HCT116 (cell line): ENCODE measurements at regions of chr13 and their contacts with region 1.

Region 1: DNA sequence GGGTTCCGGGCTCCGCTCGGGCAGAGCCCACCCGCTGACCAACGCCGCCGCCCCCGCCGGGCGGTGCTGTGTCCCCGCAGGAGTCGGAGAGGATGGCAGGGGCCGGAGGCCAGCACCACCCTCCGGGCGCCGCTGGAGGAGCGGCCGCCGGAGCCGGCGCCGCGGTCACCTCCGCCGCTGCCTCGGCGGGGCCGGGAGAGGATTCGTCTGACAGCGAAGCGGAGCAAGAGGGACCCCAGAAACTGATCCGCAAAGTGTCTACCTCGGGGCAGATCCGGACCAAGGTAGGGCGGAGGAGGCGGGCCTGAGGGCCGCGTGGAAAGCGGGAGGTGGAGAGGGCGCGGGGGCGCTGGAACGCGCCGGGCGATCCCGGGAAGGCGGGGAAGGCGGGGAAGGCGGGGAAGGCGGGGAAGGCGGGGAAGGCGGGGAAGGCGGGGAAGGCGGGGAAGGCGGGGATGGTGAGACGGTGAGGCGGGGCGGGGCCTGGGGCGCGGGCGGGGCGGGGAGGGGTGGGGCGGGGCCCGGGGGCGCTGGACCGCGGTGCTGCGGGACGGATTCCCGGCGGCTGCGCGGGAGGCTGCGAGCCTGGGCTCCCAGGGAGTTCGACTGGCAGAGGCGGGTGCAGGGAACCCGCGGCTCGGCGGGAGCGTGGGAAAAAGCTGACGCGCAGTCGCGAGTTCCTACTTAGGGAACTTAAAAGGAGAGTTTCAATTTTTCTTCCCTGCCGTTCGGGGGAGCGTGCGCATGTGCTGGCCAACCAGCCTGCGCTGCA is 420 bp downstream of the DGKH start:
- DNase-seq: peak; percentile 33
- ATAC-seq: peak; percentile 76
- H3K4me3 ChIP-seq: peak overlapping the region; percentile 69 to 83
- H3K27ac ChIP-seq: peak overlapping the region; percentile 85
- H3K4me1 ChIP-seq: peaks cover 10 to 17% of the 10 kb centered on the region in 2 experiments
- H3K27me3 ChIP-seq: no peaks in the 10 kb centered on the region
- CTCF ChIP-seq: 0 out of 6 replicates have a peak, but pooled peaks of 1 of the 3 experiments have one; percentile 7
- POLR2A ChIP-seq: peak; percentile 64
- RAD21 ChIP-seq: no peak

Region 2: DNA sequence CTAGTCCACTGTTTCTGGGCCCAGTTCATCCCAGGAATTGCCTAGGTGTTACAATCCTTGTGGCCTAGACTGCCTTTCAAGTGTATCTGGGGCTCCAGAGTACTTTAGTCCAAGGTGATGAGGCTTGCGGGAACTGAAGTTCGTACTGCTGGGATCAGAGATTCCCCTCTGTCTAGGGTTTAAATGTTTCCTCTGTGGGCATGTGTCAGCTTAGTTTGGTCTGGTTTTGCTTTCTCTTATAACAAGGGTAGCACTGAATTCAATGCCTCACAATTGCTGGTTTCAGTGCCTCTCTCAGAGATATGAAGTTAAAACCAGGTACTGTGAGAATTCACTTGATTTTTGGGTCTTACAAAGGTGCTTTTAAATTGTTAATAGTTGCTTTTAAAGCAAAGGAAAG is 560.7 kb before region 1 on chr13:
- CTCF ChIA-PET with region 1: no interaction called
- POLR2A ChIA-PET with region 1: no interaction called
- RAD21 ChIA-PET with region 1: no interaction called
- intact Hi-C with region 1: no loop called
- DNase-seq: no peak
- ATAC-seq: no peak
- H3K4me3 ChIP-seq: no peak overlapping the region
- H3K27ac ChIP-seq: no peak overlapping the region
- H3K4me1 ChIP-seq: no peaks in the 10 kb centered on the region
- H3K27me3 ChIP-seq: no peaks in the 10 kb centered on the region
- CTCF ChIP-seq: no peak
- POLR2A ChIP-seq: no peak
- RAD21 ChIP-seq: no peak

Region 3: GRCh38 chr13:41895478-41895877 is 153.4 kb before region 1 on chr13:
- CTCF ChIA-PET with region 1: no interaction called
- POLR2A ChIA-PET with region 1: no interaction called
- RAD21 ChIA-PET with region 1: no interaction called
- intact Hi-C with region 1: no loop called
- DNase-seq: no peak
- ATAC-seq: no peak
- H3K4me3 ChIP-seq: no peak overlapping the region
- H3K27ac ChIP-seq: no peak overlapping the region
- H3K4me1 ChIP-seq: no peaks in the 10 kb centered on the region
- H3K27me3 ChIP-seq: no peaks in the 10 kb centered on the region
- CTCF ChIP-seq: no peak
- POLR2A ChIP-seq: no peak
- RAD21 ChIP-seq: no peak

Region 4: DNA sequence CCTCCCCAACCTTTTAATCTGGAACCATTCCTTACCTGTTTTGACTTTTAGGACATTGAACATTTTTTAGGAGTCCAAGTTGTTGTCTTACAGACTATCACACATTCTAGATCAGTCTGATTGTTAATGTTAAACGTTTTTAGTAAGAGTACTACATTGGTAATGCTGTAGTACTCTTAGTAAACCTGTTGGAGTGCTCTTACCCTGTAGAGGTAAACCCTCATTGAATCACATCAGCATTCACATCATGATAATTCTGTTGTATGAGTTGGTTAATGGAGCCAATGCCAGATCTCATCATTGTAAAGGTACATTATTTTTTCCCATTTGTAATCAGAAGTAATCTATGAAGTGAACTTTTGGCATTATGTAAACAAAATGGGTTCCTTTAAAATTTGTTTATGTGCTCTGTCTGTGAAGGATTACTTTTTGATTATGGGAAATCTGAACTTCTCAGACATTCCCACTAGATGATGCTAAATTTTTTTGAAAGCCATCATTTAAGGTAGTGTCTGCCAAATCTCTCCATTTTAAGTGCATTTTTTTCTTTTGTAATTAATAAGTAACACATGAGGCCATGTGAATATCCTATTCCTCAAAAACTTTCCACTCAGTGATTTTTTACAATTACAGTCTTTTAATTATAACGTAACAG is 143.1 kb before region 1 on chr13:
- CTCF ChIA-PET with region 1: no interaction called
- POLR2A ChIA-PET with region 1: no interaction called
- RAD21 ChIA-PET with region 1: no interaction called
- intact Hi-C with region 1: loop called (anchors 5 kb)
- DNase-seq: peak; percentile 34
- ATAC-seq: peak; percentile 97
- H3K4me3 ChIP-seq: no peak overlapping the region
- H3K27ac ChIP-seq: no peak overlapping the region
- H3K4me1 ChIP-seq: peaks cover 0 to 8% of the 10 kb centered on the region in 2 experiments; a peak in 2 of 4 replicates
- H3K27me3 ChIP-seq: no peaks in the 10 kb centered on the region
- CTCF ChIP-seq: peak; percentile 12 to 69 (median 63); a peak in 5 of 6 replicates
- POLR2A ChIP-seq: no peak
- RAD21 ChIP-seq: peak; percentile 41; the same call in 1 of the 2 replicates

Region 5: DNA sequence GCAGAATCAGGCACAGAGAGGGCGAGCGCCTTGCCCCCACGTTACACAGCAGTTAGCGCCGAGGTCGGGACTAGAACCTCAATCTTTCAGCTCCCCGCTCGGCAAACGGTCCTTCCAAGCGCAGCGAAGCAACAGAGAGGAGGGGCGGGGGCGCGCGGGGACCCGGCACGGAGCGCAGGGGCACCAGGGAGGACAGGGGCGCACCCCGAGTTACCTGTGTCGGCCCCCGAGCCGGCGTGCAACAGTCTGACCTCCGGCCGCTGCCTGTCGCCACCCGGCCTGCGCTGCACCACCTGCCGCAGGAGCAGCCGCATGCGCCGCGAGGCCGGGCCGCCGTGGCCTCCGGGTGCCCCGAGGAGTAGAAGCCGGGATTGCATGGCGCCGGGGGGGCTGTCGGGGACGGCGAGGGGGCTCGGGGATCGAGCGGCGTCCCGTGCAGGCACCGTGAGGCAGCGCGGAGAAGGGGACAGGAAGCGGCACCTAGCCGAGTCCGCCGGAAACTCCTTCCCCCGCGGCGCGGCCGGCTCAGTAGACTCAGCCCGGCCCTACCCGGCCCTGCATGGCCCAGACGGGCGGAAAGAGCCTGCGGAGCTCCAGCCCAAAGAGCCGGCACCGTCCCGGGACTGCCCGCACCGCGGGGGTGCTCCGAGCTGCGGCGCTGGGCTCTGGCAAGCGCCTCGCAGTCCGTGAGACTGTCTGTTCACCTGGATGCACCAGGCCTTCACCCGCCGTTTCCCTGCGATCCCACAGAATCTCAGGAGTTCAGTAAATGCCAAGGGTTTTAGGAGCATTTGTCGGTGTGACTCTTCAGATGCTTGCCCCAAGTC is 88.0 kb before region 1 on chr13 and contains the start of gene VWA8:
- CTCF ChIA-PET with region 1: no interaction called
- POLR2A ChIA-PET with region 1: no interaction called
- RAD21 ChIA-PET with region 1: no interaction called
- intact Hi-C with region 1: loop called (anchors 5 kb)
- DNase-seq: peak; percentile 63
- ATAC-seq: peak; percentile 91
- H3K4me3 ChIP-seq: peak within 1 kb of the TSS; percentile 84 to 86
- H3K27ac ChIP-seq: peak within 1 kb of the TSS; percentile 77
- H3K4me1 ChIP-seq: peaks cover 4 to 14% of the 10 kb centered on the region in 2 experiments; a peak in 3 of 4 replicates
- H3K27me3 ChIP-seq: no peaks in the 10 kb centered on the region
- CTCF ChIP-seq: no peak
- POLR2A ChIP-seq: peak; percentile 63
- RAD21 ChIP-seq: no peak
- total RNA-seq, gene VWA8: 22.6 TPM